Activated CD8-positive, alpha-beta T cell treated with anti-CD3 and anti-CD28 coated beads for 36 hours (primary cell): ENCODE measurements at regions of chr16 and their contacts with region 1.

Region 1: GRCh38 chr16:25051406-25052150 is 36.4 kb upstream of the ARHGAP17 start:
- DNase-seq: peak; percentile 51
- ATAC-seq: peak; percentile 25
- H3K4me3 Mint-ChIP-seq: peak overlapping the region; percentile 47
- H3K27ac Mint-ChIP-seq: peak overlapping the region; percentile 83
- H3K4me1 Mint-ChIP-seq: peaks cover 57% of the 10 kb centered on the region
- H3K27me3 Mint-ChIP-seq: no peaks in the 10 kb centered on the region
- CTCF ChIP-seq: no peak

Region 2: DNA sequence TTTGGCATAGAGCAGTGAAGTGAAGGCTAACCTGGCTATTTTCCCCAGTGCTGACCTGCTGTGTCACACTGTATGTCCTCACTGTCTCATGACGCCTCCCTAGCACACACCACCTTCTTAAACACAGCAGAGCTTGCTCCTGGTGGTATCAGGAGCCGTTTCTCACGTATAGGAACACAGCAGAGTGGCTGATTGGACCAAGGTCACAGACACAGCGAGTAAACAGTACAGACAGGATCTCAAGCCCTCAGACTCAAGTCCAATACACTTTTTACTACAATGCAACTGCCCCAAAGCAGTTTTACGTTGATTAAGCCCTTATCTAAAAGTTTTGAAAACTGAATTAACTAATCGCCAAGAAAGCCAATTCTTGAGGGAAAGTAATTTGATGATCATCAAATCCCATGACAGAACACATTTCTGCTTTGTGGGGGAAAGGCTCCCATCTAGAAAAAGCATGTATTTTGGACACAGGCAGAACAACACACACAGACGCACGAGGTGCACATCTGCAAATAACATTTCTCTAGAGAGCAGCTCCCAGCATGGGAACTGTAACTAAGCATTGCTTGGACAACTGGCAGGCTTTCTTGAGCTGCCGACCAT is 51.6 kb before region 1 on chr16:
- CTCF ChIA-PET with region 1: no interaction called
- POLR2A ChIA-PET with region 1: no interaction called
- intact Hi-C with region 1: no loop called
- DNase-seq: no peak
- ATAC-seq: no peak
- H3K4me3 Mint-ChIP-seq: no peak overlapping the region
- H3K27ac Mint-ChIP-seq: no peak overlapping the region
- H3K4me1 Mint-ChIP-seq: peaks cover 57% of the 10 kb centered on the region
- H3K27me3 Mint-ChIP-seq: no peaks in the 10 kb centered on the region
- CTCF ChIP-seq: no peak

Region 3: DNA sequence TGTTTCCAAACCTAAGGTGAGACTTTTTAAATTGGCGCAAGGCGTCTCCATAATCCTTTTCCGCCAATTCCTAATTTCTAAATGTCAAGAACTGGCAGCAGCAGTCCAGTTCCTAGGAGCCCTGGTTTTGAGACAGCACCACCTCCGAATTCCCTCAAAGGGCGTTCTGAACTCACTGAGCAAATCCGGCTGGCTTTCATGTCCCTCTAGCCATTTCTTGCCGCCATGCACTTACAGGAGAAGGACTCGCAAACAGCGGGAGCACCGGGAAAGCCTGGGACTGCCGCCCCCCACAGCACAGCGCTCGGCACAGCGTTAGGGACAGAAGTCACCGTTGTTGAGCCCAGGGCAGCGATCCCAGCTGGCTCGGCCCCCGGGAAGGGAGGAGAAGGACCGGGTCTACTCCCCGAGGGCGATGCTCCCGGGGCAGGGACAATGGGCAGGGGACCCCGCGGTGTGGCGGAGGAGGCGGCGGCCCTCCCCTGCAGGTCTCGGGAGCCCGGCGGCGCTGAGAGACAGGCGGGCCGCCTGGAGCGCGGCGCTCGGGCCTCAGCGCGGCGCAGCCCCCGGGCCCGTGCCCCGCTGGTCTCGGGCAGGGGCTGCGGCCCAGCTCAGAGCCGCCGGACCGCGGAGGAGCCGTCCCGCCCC is 37.0 kb before region 1 on chr16:
- CTCF ChIA-PET with region 1: interaction called, 5 read pairs
- POLR2A ChIA-PET with region 1: interaction called, 17 read pairs
- intact Hi-C with region 1: no loop called
- DNase-seq: peak; percentile 29
- ATAC-seq: peak; percentile 25
- H3K4me3 Mint-ChIP-seq: peak overlapping the region; percentile 91
- H3K27ac Mint-ChIP-seq: peak overlapping the region; percentile 91
- H3K4me1 Mint-ChIP-seq: peaks cover 73% of the 10 kb centered on the region
- H3K27me3 Mint-ChIP-seq: no peaks in the 10 kb centered on the region
- CTCF ChIP-seq: no peak

Region 4: GRCh38 chr16:25031441-25032307 is 19.9 kb before region 1 on chr16:
- CTCF ChIA-PET with region 1: no interaction called
- POLR2A ChIA-PET with region 1: interaction called, 35 read pairs
- intact Hi-C with region 1: no loop called
- DNase-seq: peak; percentile 93
- ATAC-seq: peak; percentile 98
- H3K4me3 Mint-ChIP-seq: peak overlapping the region; percentile 76
- H3K27ac Mint-ChIP-seq: peak overlapping the region; percentile 97
- H3K4me1 Mint-ChIP-seq: peaks cover 41% of the 10 kb centered on the region
- H3K27me3 Mint-ChIP-seq: no peaks in the 10 kb centered on the region
- CTCF ChIP-seq: no peak

Region 5: GRCh38 chr16:25111403-25112166 is 60.0 kb after region 1 on chr16 and contains the start of gene LCMT1:
- CTCF ChIA-PET with region 1: interaction called, 23 read pairs
- POLR2A ChIA-PET with region 1: interaction called, 7 read pairs
- intact Hi-C with region 1: no loop called
- DNase-seq: peak; percentile 97
- ATAC-seq: peak; percentile 78
- H3K4me3 Mint-ChIP-seq: peak within 1 kb of the TSS; percentile 80
- H3K27ac Mint-ChIP-seq: peak within 1 kb of the TSS; percentile 98
- H3K4me1 Mint-ChIP-seq: peaks cover 53% of the 10 kb centered on the region
- H3K27me3 Mint-ChIP-seq: no peaks in the 10 kb centered on the region
- CTCF ChIP-seq: no peak
- total RNA-seq, gene LCMT1: 37.1 to 40.7 TPM

Region 6: GRCh38 chr16:25126820-25127232 is 75.2 kb after region 1 on chr16:
- CTCF ChIA-PET with region 1: no interaction called
- POLR2A ChIA-PET with region 1: no interaction called
- intact Hi-C with region 1: loop called (anchors 1 kb)
- DNase-seq: peak; percentile 66
- ATAC-seq: peak; percentile 86
- H3K4me3 Mint-ChIP-seq: no peak overlapping the region
- H3K27ac Mint-ChIP-seq: no peak overlapping the region
- H3K4me1 Mint-ChIP-seq: peaks cover 31% of the 10 kb centered on the region
- H3K27me3 Mint-ChIP-seq: no peaks in the 10 kb centered on the region
- CTCF ChIP-seq: peak; percentile 77

Region 7: GRCh38 chr16:25235991-25236390 is 184.4 kb after region 1 on chr16:
- CTCF ChIA-PET with region 1: no interaction called
- POLR2A ChIA-PET with region 1: no interaction called
- intact Hi-C with region 1: loop called (anchors 5 kb)
- DNase-seq: no peak
- ATAC-seq: no peak
- H3K4me3 Mint-ChIP-seq: no peak overlapping the region
- H3K27ac Mint-ChIP-seq: no peak overlapping the region
- H3K4me1 Mint-ChIP-seq: no peaks in the 10 kb centered on the region
- H3K27me3 Mint-ChIP-seq: no peaks in the 10 kb centered on the region
- CTCF ChIP-seq: no peak